Heart left ventricle (tissue), 16 donors: ENCODE measurements at regions of chr6 and their contacts with region 1.

Region 1: GRCh38 chr6:3724451-3725108 is 26.9 kb downstream of the PXDC1 start:
- DNase-seq: peak in 3 of 5 donors; percentile 49 to 75 (median 69)
- ATAC-seq: peak in 3 of 4 donors; percentile 47 to 59 (median 56)
- H3K4me3 ChIP-seq: no peak overlapping the region
- H3K27ac ChIP-seq: peak overlapping the region; percentile 2 to 79 (median 45)
- H3K4me1 ChIP-seq: peaks cover 0 to 55% (median 32%) of the 10 kb centered on the region in 12 donors
- H3K27me3 ChIP-seq: no peaks in the 10 kb centered on the region
- CTCF ChIP-seq: no peak
- POLR2A ChIP-seq: no peak

Region 2: DNA sequence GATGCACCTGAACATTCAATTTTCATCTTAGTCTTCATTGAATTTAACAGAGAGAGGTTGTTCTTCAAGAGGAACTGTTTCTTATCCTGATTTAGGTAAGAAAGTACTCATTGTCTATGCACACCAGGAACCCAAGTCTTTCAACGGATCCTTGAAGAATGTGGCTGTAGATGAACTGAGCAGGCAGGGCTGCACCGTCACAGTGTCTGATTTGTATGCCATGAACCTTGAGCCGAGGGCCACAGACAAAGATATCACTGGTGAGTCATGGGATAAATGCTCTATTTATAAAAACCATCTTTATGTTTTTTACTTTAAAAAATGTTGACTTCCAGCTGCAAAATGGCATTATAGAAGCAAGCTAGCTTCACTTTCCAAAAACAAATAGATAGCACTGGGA is 714.6 kb before region 1 on chr6:
- intact Hi-C with region 1: no loop called
- DNase-seq: no peak
- ATAC-seq: no peak
- H3K4me3 ChIP-seq: no peak overlapping the region
- H3K27ac ChIP-seq: no peak overlapping the region
- H3K4me1 ChIP-seq: peaks cover 0 to 6% (median 0%) of the 10 kb centered on the region in 12 donors
- H3K27me3 ChIP-seq: no peaks in the 10 kb centered on the region
- CTCF ChIP-seq: no peak
- POLR2A ChIP-seq: no peak

Region 3: DNA sequence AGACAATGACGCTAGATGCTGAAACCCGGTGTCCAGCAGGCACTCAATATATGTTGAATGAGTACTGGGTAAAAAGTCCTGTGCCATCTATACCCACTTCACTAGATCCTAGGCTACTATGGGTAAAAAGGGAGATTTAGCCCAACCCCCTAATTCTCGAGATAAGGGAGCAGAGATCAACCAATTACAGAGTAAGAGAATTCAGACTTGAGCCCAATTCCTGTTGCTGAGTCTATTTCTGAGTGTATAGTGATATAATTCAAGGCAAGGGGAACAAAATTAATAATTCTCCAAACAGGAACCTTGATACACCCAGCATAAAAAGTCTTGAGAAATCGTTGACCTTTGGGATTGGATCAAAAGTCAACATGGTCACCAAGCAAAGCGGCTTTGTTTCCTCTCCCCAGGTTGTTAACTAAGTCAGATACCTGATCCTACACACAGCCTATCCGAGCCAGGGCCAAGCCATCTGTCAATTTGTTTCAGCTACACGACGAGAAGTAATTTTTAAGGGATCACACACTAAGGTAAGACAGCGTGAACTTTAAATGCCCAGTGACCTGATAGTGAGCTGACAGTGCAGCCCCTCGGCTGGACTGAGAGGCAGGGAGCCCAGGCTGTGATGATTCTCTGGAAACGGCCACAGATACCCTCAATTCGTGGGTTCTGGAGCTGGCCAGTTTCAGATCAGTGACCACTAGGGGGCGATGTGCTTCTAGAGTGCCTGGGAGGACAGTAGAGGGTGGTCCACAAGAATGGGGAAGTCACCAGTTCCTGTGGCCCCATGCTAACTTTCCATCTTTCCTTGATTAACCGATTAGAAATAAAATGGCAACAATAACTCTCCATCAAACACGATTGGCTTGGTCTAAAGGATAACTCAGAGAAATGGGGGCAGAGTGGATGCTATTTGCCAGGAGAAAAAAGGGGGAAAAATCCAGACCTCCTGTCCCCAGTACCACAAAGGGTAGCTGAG is 313.9 kb before region 1 on chr6:
- intact Hi-C with region 1: loop called in 1 of 10 experiments (anchors 5 kb)
- DNase-seq: peak in 4 of 5 donors; percentile 46 to 56 (median 54)
- ATAC-seq: peak in 3 of 4 donors; percentile 32 to 58 (median 53)
- H3K4me3 ChIP-seq: no peak overlapping the region
- H3K27ac ChIP-seq: no peak overlapping the region
- H3K4me1 ChIP-seq: peaks cover 0 to 6% (median 0%) of the 10 kb centered on the region in 12 donors
- H3K27me3 ChIP-seq: no peaks in the 10 kb centered on the region
- CTCF ChIP-seq: peak; percentile 54 to 79 (median 70)
- POLR2A ChIP-seq: no peak